PC-3 (cell line): ENCODE measurements at regions of chr12 and their contacts with region 1.

Region 1: GRCh38 chr12:45670346-45671065 is 59.0 kb upstream of the ARID2 start:
- DNase-seq: no peak
- ATAC-seq: no peak
- H3K4me3 ChIP-seq: no peak overlapping the region
- H3K27ac ChIP-seq: no peak overlapping the region
- H3K4me1 ChIP-seq: peaks cover 24% of the 10 kb centered on the region
- H3K27me3 ChIP-seq: no peaks in the 10 kb centered on the region
- CTCF ChIP-seq: no peak

Region 2: GRCh38 chr12:45615268-45615667 is 55.2 kb before region 1 on chr12:
- CTCF ChIA-PET with region 1: no interaction called
- POLR2A ChIA-PET with region 1: no interaction called
- intact Hi-C with region 1: loop called (anchors 5 kb)
- DNase-seq: peak; percentile 95
- ATAC-seq: peak; percentile 99
- H3K4me3 ChIP-seq: no peak overlapping the region
- H3K27ac ChIP-seq: no peak overlapping the region
- H3K4me1 ChIP-seq: peaks cover 17% of the 10 kb centered on the region
- H3K27me3 ChIP-seq: no peaks in the 10 kb centered on the region
- CTCF ChIP-seq: no peak

Region 3: DNA sequence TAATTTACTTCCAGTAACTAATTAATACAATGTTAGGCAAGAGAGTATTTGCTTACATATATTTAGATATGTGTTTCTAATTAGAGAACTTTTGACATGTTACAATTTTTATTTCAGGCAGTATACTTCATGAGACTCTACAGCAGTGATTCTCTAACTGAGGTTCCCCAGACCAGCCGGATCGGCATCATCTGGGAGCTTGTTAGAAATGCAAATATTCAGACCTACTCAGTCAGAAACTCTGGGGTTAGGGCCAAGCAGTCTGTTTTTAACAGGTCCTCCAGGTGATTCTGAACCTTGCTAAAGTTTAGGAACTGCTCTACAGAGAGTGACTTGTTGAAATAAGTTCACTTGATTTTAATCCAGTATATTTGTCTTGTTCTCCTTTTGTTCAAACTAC is 105.5 kb after region 1 on chr12:
- CTCF ChIA-PET with region 1: no interaction called
- POLR2A ChIA-PET with region 1: no interaction called
- intact Hi-C with region 1: no loop called
- DNase-seq: no peak
- ATAC-seq: no peak
- H3K4me3 ChIP-seq: no peak overlapping the region
- H3K27ac ChIP-seq: no peak overlapping the region
- H3K4me1 ChIP-seq: peaks cover 5% of the 10 kb centered on the region; the same call in 1 of the 2 replicates
- H3K27me3 ChIP-seq: no peaks in the 10 kb centered on the region
- CTCF ChIP-seq: no peak